Transverse colon (tissue), 4 donors: ENCODE measurements at regions of chr18 and their contacts with region 1.

Region 1: GRCh38 chr18:27005589-27005988 is 140.1 kb upstream of the AQP4 start:
- DNase-seq: no peak
- H3K4me3 ChIP-seq: no peak overlapping the region
- H3K27ac ChIP-seq: no peak overlapping the region
- H3K4me1 ChIP-seq: no peaks in the 10 kb centered on the region
- H3K27me3 ChIP-seq: no peaks in the 10 kb centered on the region
- CTCF ChIP-seq: peak in 1 of 5 experiments; percentile 9
- EP300 ChIP-seq: no peak
- POLR2A ChIP-seq: no peak

Region 2: GRCh38 chr18:26804519-26804918 is 201.1 kb before region 1 on chr18:
- in situ Hi-C with region 1: loop called in 1 of 4 experiments (anchors 10 kb)
- intact Hi-C with region 1: no loop called
- DNase-seq: no peak
- H3K4me3 ChIP-seq: no peak overlapping the region
- H3K27ac ChIP-seq: no peak overlapping the region
- H3K4me1 ChIP-seq: no peaks in the 10 kb centered on the region
- H3K27me3 ChIP-seq: no peaks in the 10 kb centered on the region
- CTCF ChIP-seq: peak in 2 of 5 experiments; percentile 14 to 30
- EP300 ChIP-seq: no peak
- POLR2A ChIP-seq: no peak